CD4-positive, alpha-beta T cell (primary cell): ENCODE measurements at regions of chr22 and their contacts with region 1.

Region 1: DNA sequence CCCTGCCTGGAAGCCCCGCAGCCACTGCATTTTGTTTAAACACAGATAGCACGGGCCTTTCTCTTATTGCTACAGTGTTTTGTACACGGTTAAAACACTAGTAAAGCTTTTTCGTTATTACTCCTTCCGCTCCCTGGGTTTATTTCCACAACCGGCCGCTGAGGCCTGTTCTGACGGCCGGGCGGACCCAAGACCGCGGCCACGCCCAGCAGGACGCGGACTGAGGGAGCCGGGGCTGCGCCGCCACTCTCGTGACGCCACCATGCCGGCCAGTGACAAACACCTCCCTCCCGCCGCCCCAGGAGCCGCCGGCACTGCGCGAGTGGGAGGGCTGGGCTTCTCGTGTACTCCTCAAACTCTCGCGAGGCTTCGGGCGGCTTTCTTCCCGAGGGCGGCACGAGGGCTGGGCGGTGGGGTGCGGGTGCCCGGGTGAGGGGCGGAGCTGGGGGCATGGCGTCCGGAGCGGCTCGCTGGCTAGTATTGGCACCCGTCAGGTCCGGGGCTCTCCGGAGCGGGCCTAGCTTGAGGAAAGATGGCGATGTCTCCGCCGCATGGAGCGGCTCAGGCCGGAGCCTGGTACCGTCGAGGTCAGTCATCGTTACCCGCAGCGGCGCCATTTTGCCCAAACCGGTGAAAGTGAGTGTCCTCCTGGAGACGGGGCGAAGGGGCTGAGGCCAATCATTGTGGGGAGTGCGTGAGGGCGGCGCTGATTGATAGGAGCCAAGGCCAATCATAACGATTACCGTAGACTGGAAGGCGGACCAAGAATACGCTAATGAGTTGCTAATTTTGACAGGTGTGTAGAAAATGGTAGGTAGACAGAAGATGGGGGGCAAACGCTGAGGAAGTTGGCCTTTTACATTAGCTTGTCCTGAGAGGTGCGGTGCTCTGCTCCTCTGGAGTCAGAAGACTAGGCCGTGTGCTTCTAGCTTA is at the start of gene SMDT1:
- DNase-seq: peak; percentile 96 to 99 (median 98)
- ATAC-seq: peak; percentile 91
- H3K4me3 ChIP-seq: peak within 1 kb of the TSS; percentile 73
- H3K4me3 Mint-ChIP-seq: peak within 1 kb of the TSS; percentile 93
- H3K27ac ChIP-seq: peak within 1 kb of the TSS; percentile 98 to 99
- H3K27ac Mint-ChIP-seq: peak within 1 kb of the TSS; percentile 97
- H3K4me1 ChIP-seq: peaks cover 50% of the 10 kb centered on the region
- H3K4me1 Mint-ChIP-seq: peaks cover 56% of the 10 kb centered on the region
- H3K27me3 ChIP-seq: no peaks in the 10 kb centered on the region
- H3K27me3 Mint-ChIP-seq: no peaks in the 10 kb centered on the region
- CTCF ChIP-seq: no peak
- total RNA-seq, gene SMDT1: 84.7 to 86.4 TPM

Region 2: GRCh38 chr22:41666661-41667258 is 412.8 kb before region 1 on chr22:
- CTCF ChIA-PET with region 1: no interaction called
- POLR2A ChIA-PET with region 1: no interaction called
- intact Hi-C with region 1: loop called in 1 of 2 experiments (anchors 10 kb)
- DNase-seq: peak; percentile 84 to 97 (median 93)
- ATAC-seq: peak; percentile 92
- H3K4me3 ChIP-seq: peak overlapping the region; percentile 58
- H3K4me3 Mint-ChIP-seq: peak overlapping the region; percentile 90
- H3K27ac ChIP-seq: peak overlapping the region; percentile 77 to 85
- H3K27ac Mint-ChIP-seq: peak overlapping the region; percentile 94
- H3K4me1 ChIP-seq: peaks cover 17% of the 10 kb centered on the region
- H3K4me1 Mint-ChIP-seq: peaks cover 13% of the 10 kb centered on the region
- H3K27me3 ChIP-seq: no peaks in the 10 kb centered on the region
- H3K27me3 Mint-ChIP-seq: no peaks in the 10 kb centered on the region
- CTCF ChIP-seq: peak; percentile 97

Region 3: GRCh38 chr22:41998361-41999275 is 81.0 kb before region 1 on chr22 and contains the start of gene WBP2NL:
- CTCF ChIA-PET with region 1: no interaction called
- POLR2A ChIA-PET with region 1: interaction called, 10 read pairs
- intact Hi-C with region 1: loop called (anchors 2 to 5 kb)
- DNase-seq: peak; percentile 77 to 94 (median 88)
- ATAC-seq: peak; percentile 95
- H3K4me3 ChIP-seq: peak within 1 kb of the TSS; percentile 73
- H3K4me3 Mint-ChIP-seq: peak within 1 kb of the TSS; percentile 93
- H3K27ac ChIP-seq: peak within 1 kb of the TSS in 1 of 2 donors; percentile 61
- H3K27ac Mint-ChIP-seq: peak within 1 kb of the TSS; percentile 73
- H3K4me1 ChIP-seq: peaks cover 23% of the 10 kb centered on the region
- H3K4me1 Mint-ChIP-seq: peaks cover 23% of the 10 kb centered on the region
- H3K27me3 ChIP-seq: no peaks in the 10 kb centered on the region
- H3K27me3 Mint-ChIP-seq: no peaks in the 10 kb centered on the region
- CTCF ChIP-seq: no peak
- total RNA-seq, gene WBP2NL: 0.38 to 1.7 TPM

Region 4: DNA sequence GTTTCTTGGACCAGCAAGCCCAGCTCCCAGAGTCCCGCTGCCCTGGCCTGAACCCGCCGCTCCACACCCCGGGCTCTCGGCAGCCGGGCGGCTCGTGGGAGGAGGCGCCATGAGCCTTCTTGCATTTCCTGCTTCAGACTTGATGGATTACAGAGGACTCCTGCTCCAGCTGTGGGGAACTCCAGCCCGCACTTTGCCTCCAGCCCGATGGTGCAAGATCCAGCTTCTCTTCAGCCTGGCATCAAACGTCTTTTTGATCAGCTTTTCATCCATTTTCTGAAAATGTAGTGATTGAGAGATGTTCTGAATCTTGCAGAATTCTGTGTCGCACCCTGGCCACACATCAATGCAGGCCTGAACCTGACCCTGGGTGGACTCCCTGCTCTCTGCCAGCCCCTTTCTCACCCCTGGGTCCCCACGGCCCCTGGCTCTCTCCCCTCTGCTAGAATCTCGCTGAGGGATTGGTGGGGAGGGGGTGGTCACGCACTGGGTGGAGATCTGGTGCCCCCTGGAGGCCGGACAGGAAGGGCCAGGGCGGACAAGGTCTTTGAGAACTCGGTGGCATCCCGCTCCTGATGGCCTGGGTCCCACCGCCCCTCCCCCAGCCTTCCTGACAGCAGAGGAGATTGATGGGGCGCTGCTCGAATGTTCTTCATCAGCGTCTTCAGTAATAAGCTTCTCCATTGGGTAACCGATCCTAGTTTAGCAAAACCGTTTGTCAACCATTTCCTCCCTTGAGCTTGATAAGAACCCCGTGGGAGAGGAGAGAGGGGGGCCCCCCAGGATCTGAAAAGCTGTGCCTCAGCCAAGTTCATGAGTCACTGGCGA is 364.7 kb after region 1 on chr22:
- CTCF ChIA-PET with region 1: interaction called, 3 read pairs
- POLR2A ChIA-PET with region 1: interaction called, 26 read pairs
- intact Hi-C with region 1: loop called in 1 of 2 experiments (anchors 5 kb)
- DNase-seq: peak; percentile 63 to 92 (median 80)
- ATAC-seq: peak; percentile 95
- H3K4me3 ChIP-seq: peak overlapping the region; percentile 62
- H3K4me3 Mint-ChIP-seq: peak overlapping the region; percentile 88
- H3K27ac ChIP-seq: peak overlapping the region; percentile 73 to 78
- H3K27ac Mint-ChIP-seq: peak overlapping the region; percentile 96
- H3K4me1 ChIP-seq: peaks cover 24% of the 10 kb centered on the region
- H3K4me1 Mint-ChIP-seq: peaks cover 28% of the 10 kb centered on the region
- H3K27me3 ChIP-seq: no peaks in the 10 kb centered on the region
- H3K27me3 Mint-ChIP-seq: no peaks in the 10 kb centered on the region
- CTCF ChIP-seq: peak; percentile 63

Region 5: DNA sequence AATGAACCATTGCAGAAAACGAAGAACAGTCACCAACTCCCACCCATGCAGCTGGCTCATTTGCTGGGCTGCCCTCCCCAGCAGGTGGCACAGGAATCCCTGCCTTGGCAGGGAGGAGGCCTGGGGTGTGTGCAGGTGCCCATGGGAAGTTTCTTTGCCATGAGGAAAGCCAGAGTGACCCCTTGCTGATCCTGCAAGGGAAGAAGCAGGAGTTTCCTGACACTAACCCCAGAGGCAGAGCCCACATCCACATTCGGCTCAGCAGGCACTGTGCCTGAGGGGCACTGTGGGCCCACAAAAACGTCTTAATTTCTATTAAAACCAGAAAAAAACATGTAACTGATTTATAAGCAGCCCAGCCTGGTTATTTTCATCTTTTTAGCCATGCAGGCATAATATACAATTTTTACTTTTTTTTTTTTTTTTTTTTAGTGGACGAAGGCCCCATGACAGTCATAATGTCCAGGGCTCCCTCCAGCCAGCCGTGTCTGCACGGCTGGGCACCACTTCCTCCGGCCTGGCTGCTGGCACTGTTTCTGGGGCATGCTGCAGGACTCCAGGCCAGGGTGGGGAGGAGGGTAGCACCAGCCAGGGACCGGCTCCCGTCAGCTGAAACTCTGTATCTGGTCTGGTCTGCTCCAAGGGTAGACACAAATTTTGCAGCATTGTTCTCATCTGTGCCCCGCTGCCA is 448.8 kb after region 1 on chr22:
- CTCF ChIA-PET with region 1: no interaction called
- POLR2A ChIA-PET with region 1: no interaction called
- intact Hi-C with region 1: loop called in 1 of 2 experiments (anchors 10 kb)
- DNase-seq: peak in 1 of 14 experiments; percentile 13
- ATAC-seq: no peak
- H3K4me3 ChIP-seq: no peak overlapping the region
- H3K4me3 Mint-ChIP-seq: no peak overlapping the region
- H3K27ac ChIP-seq: no peak overlapping the region
- H3K27ac Mint-ChIP-seq: no peak overlapping the region
- H3K4me1 ChIP-seq: peaks cover 8% of the 10 kb centered on the region
- H3K4me1 Mint-ChIP-seq: peaks cover 5% of the 10 kb centered on the region
- H3K27me3 ChIP-seq: no peaks in the 10 kb centered on the region
- H3K27me3 Mint-ChIP-seq: no peaks in the 10 kb centered on the region
- CTCF ChIP-seq: no peak

Region 6: DNA sequence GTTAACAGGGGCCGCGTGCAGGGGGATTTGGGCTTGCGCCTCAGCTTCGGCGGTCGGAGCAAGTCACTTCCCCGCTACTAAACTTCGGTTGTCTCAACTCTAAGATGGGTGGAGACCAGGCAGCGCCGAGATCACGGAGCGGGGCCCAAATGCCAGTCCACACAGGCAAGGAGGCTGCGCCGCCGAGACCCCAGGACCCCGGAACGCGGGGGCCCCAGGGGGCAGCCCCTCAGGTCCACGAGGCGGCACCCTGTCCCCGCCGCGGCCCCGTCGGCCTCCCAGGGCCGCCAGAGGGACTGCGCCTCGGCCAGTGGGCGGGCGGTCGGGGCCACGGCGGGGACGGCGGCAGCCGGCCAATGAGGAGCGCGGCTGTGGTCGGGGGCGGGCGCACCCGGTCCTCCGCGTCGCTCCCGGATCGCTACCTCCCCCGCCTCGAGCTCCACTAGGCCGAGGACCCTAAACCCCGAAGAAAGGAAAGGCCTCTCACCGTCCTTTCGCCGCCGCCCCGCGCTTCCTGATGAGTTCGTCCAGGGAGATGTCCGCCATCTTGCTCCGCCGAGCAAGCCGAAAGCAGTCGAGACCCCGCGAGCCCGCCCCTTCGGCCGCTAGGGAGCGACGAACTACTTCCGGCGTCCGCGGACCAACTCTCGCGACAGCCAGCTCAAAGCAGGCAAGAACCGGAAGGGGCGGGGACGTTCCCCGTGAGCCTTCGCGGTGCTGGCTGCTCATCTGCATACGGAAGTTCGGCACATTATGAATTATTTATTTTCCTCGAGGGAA is 534.9 kb after region 1 on chr22 and contains the start of gene POLDIP3:
- CTCF ChIA-PET with region 1: no interaction called
- POLR2A ChIA-PET with region 1: interaction called, 11 read pairs
- intact Hi-C with region 1: loop called in 1 of 2 experiments (anchors 10 kb)
- DNase-seq: peak; percentile 98 to 99 (median 99)
- ATAC-seq: peak; percentile 69
- H3K4me3 ChIP-seq: peak within 1 kb of the TSS; percentile 91
- H3K4me3 Mint-ChIP-seq: peak within 1 kb of the TSS; percentile 92
- H3K27ac ChIP-seq: peak within 1 kb of the TSS; percentile 83 to 98
- H3K27ac Mint-ChIP-seq: peak within 1 kb of the TSS; percentile 99
- H3K4me1 ChIP-seq: peaks cover 64% of the 10 kb centered on the region
- H3K4me1 Mint-ChIP-seq: peaks cover 60% of the 10 kb centered on the region
- H3K27me3 ChIP-seq: no peaks in the 10 kb centered on the region
- H3K27me3 Mint-ChIP-seq: no peaks in the 10 kb centered on the region
- CTCF ChIP-seq: no peak
- total RNA-seq, gene POLDIP3: 77.7 to 80.7 TPM